Heart left ventricle (tissue), 16 donors: ENCODE measurements at regions of chr2 and their contacts with region 1.

Region 1: GRCh38 chr2:39059366-39059952 is 61.4 kb downstream of the SOS1 start:
- DNase-seq: no peak
- ATAC-seq: no peak
- H3K4me3 ChIP-seq: no peak overlapping the region
- H3K27ac ChIP-seq: no peak overlapping the region
- H3K4me1 ChIP-seq: no peaks in the 10 kb centered on the region
- H3K27me3 ChIP-seq: no peaks in the 10 kb centered on the region
- CTCF ChIP-seq: peak; percentile 60 to 82 (median 74)
- POLR2A ChIP-seq: no peak

Region 2: DNA sequence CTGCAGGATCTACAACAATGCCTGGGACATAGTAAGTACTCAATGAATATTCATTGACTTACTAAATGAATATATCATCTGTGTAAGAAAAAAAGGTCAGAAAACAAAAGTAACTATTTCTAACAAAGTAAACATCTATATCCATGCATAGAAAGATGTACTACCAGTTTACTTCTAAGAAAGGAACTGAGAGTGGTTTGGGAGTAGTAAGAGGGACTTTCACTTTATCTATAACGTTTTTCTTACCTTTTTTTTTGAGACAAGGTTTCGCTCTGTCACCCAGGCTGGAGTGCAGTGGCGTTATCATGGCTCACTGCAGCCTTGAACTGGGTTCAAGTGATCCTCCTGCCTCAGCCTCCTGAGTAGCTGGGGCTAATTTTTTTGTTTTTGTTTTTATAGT is 209.4 kb before region 1 on chr2:
- intact Hi-C with region 1: no loop called
- DNase-seq: no peak
- ATAC-seq: no peak
- H3K4me3 ChIP-seq: no peak overlapping the region
- H3K27ac ChIP-seq: no peak overlapping the region
- H3K4me1 ChIP-seq: no peaks in the 10 kb centered on the region
- H3K27me3 ChIP-seq: no peaks in the 10 kb centered on the region
- CTCF ChIP-seq: no peak
- POLR2A ChIP-seq: no peak

Region 3: DNA sequence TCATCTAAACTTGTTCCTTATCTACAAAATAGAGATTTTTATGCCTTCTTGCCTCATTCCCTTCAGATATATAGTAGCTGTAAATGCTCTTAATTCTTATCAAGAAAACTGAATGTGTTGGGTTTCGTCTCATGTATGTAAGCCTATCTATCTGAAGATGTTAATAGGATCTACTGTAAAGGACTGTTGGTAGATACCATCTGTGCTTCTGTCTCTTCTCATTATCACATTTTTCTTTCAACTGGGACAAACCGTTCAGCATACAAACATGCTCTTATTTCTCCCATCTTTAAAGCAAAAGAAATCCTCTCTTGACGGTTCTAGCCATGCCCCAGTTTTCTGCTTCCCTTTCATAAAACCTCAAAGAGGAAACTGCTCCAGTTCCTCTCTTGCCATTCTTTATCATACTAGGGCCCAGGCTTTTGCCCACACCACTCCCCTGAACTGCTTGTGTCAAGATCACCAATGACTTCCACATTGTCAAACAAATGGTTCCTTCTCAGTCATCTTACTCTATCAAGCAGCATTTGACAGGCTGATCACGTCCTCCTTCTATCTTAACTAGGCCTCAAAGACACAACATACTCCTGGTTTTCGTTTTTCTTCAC is 81.1 kb before region 1 on chr2:
- intact Hi-C with region 1: no loop called
- DNase-seq: no peak
- ATAC-seq: no peak
- H3K4me3 ChIP-seq: no peak overlapping the region
- H3K27ac ChIP-seq: no peak overlapping the region
- H3K4me1 ChIP-seq: peaks cover 0 to 11% (median 0%) of the 10 kb centered on the region in 12 donors
- H3K27me3 ChIP-seq: no peaks in the 10 kb centered on the region
- CTCF ChIP-seq: no peak
- POLR2A ChIP-seq: no peak

Region 4: DNA sequence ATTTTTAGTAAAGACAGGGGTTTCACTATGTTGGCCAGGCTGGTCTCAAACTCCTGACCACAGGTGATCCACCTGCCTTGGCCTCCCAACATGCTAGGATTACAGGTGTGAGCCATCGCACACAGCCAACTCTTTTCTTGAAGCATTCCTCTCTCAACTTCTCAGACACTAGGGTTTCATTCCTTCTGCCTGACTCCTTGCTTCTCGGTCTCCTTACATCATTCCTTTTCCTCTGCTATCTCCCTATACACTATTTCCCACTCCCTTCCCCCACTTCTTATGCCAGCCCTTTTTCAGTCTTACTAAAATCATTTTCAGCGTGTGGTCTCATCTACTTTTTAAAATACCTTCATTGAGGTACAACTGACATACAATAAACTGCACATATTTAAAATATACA is 55.3 kb after region 1 on chr2:
- intact Hi-C with region 1: loop called in 4 of 10 experiments (anchors 5 to 10 kb)
- DNase-seq: no peak
- ATAC-seq: no peak
- H3K4me3 ChIP-seq: no peak overlapping the region
- H3K27ac ChIP-seq: no peak overlapping the region
- H3K4me1 ChIP-seq: peaks cover 0 to 49% (median 22%) of the 10 kb centered on the region in 12 donors
- H3K27me3 ChIP-seq: no peaks in the 10 kb centered on the region
- CTCF ChIP-seq: no peak
- POLR2A ChIP-seq: no peak

Region 5: GRCh38 chr2:39124000-39124745 is 64.7 kb after region 1 on chr2:
- intact Hi-C with region 1: loop called in 7 of 10 experiments (anchors 2 to 10 kb)
- DNase-seq: peak; percentile 95 to 98 (median 98)
- ATAC-seq: peak; percentile 84 to 94 (median 93)
- H3K4me3 ChIP-seq: peak overlapping the region; percentile 37 to 94 (median 76)
- H3K27ac ChIP-seq: peak overlapping the region; percentile 82 to 96 (median 92)
- H3K4me1 ChIP-seq: peaks cover 0 to 50% (median 18%) of the 10 kb centered on the region in 12 donors
- H3K27me3 ChIP-seq: no peaks in the 10 kb centered on the region
- CTCF ChIP-seq: peak; percentile 44 to 75 (median 66)
- POLR2A ChIP-seq: peak in 1 of 2 donors; percentile 88